ENCODE measurements at regions of chr4 and their contacts with region 1.

Region 1: DNA sequence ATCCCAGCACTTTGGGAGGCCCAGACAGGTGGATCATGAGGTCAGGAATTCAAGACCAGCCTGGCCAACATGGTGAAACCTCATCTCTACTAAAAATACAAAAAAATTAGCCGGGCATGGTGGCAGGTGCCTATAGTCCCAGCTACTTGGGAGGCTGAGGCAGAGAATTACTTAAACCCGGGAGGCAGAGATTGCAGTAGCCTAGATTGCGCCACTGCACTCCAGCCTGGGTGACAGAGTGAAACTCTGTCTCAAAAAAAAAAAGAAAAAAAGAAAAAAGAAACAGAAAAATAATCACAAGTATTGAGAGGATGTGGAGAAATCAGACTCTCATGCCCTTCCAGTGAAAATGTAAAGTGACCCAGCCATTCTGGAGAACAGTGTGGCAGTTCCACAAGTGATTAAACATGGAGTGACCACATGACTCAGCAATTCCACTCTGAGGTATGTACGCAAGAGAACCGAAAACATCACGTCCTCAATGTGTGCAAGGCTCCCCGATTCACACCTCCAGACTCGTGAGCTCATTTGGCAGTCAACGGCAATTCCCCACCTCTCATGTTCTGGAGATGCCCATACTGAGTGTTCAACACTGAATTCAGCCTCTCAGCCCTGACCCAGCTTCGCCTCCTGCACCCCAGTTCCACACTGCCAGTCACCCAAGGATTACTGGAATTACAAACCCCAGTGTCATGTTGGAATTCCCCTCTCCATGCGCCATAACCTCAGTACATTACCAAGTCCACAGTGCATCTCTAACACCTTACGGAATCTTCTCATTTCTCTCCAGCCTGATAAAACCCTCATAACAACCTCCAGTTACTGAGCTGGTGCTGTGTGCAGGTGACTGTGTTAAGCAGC is 21.1 kb downstream of the ACOX3 start:
- DNase-seq: peak; percentile 88
- H3K4me3 Mint-ChIP-seq: peak overlapping the region; percentile 10
- H3K27ac Mint-ChIP-seq: peak overlapping the region; percentile 97
- H3K4me1 Mint-ChIP-seq: peaks cover 43% of the 10 kb centered on the region
- H3K27me3 Mint-ChIP-seq: peaks cover under 1% of the 10 kb centered on the region

Region 2: DNA sequence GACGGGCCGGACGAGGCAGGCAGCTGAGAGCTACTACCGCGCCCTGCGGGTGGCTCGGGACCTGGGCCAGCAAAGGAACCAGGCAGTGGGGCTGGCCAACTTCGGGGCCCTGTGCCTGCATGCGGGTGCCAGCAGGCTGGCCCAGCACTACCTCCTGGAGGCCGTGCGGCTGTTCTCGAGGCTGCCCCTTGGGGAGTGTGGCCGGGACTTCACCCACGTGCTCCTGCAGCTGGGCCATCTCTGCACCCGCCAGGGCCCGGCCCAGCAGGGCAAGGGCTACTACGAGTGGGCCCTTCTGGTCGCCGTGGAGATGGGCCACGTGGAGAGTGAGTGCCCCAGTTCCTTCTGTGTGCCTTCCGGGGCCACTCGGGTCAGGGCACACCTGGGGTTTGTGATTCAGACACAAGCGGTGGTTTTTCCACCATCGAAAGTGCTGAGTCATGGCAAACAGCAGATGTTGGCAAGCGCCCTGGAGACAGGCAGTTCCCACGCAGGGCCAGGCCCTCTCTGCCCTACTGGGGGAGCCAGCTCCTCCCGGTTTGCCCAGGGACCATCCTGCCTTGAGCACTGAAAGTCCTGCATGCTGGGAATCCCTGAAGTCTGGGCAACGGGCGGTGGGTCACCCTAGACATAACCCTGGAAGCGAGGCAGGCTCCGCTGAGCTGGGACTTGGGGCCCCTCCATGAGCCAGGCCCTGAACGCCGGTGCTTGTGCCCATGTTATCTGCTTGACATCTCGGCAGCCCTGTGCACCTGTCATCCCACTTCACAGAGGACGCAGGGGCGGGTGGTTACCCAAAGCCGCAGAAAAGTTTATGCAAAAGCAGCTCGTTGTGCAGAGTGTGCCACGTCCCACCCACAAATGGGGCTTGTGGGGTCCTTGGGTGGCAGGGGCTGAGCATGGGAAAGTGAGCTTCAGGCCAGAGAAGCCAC is 190.8 kb before region 1 on chr4:
- CTCF ChIA-PET with region 1: no interaction called
- POLR2A ChIA-PET with region 1: interaction called, 5 read pairs
- intact Hi-C with region 1: loop called (anchors 2 kb)
- DNase-seq: peak; percentile 94
- H3K4me3 Mint-ChIP-seq: no peak overlapping the region
- H3K27ac Mint-ChIP-seq: peak overlapping the region; percentile 66
- H3K4me1 Mint-ChIP-seq: peaks cover 25% of the 10 kb centered on the region
- H3K27me3 Mint-ChIP-seq: no peaks in the 10 kb centered on the region

Region 3: DNA sequence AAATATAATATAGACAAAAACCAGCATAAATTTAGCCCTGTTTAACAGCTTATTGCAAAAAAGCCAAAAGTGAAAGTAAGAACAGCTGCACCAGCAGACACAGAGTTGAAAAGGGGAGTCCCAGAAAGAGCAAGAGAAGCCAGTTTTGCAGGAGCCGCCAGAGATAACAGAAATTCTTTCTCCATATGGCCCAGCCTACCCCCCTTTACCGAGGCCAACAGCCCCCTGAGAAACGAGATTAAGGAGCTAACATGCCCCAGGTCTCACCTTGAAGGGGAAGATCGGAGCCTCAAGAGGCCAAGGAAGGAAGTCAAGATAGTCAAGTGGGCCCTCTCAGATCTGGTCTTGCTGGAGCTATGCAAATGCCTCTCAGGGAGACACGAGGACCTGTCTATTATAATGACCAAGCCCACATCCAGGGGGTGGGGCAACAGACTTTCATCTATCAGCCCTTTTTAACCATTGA is 16.3 kb after region 1 on chr4:
- CTCF ChIA-PET with region 1: interaction called, 8 read pairs
- POLR2A ChIA-PET with region 1: interaction called, 21 read pairs
- intact Hi-C with region 1: loop called (anchors 1 kb)
- DNase-seq: peak; percentile 71
- H3K4me3 Mint-ChIP-seq: peak overlapping the region; percentile 73
- H3K27ac Mint-ChIP-seq: peak overlapping the region; percentile 93
- H3K4me1 Mint-ChIP-seq: peaks cover 45% of the 10 kb centered on the region
- H3K27me3 Mint-ChIP-seq: no peaks in the 10 kb centered on the region

Region 4: DNA sequence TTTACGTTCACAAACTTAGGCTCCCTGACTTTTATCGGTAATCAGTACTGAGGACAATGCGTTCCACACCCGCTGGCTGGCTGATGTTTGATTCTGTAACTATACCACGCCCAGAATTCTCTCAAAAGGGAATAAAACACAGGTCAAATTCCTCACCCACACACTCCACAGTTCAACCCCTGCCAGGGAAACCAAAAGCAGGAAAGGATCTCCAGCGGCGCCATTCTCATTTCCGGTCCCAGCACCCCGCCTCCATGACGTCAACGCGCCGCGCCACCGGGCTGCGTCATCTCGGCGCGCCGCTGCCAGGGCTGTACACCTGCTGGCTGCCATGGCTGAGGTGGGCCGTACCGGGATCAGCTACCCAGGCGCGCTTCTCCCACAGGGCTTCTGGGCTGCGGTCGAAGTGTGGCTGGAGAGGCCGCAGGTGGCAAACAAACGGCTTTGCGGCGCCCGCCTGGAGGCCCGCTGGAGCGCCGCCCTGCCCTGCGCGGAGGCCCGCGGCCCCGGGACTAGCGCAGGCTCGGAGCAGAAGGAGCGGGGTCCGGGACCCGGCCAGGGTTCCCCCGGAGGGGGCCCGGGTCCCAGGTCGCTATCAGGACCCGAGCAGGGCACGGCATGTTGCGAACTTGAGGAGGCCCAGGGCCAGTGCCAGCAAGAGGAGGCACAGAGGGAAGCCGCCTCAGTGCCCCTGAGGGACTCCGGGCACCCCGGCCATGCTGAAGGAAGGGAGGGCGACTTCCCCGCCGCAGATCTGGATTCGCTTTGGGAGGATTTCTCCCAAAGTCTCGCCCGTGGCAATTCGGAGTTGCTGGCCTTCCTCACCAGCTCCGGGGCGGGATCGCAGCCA is 21.3 kb after region 1 on chr4 and contains the starts of genes ACOX3 and TRMT44:
- CTCF ChIA-PET with region 1: interaction called, 8 read pairs
- POLR2A ChIA-PET with region 1: interaction called, 21 read pairs
- intact Hi-C with region 1: loop called (anchors 1 kb)
- DNase-seq: peak; percentile 97
- H3K4me3 Mint-ChIP-seq: peak within 1 kb of the TSS; percentile 95
- H3K27ac Mint-ChIP-seq: peak within 1 kb of the TSS; percentile 99
- H3K4me1 Mint-ChIP-seq: peaks cover 73% of the 10 kb centered on the region
- H3K27me3 Mint-ChIP-seq: no peaks in the 10 kb centered on the region
- total RNA-seq, gene ACOX3: 42.3 to 45.8 TPM
- total RNA-seq, gene TRMT44: 24.1 to 29.2 TPM

Region 5: DNA sequence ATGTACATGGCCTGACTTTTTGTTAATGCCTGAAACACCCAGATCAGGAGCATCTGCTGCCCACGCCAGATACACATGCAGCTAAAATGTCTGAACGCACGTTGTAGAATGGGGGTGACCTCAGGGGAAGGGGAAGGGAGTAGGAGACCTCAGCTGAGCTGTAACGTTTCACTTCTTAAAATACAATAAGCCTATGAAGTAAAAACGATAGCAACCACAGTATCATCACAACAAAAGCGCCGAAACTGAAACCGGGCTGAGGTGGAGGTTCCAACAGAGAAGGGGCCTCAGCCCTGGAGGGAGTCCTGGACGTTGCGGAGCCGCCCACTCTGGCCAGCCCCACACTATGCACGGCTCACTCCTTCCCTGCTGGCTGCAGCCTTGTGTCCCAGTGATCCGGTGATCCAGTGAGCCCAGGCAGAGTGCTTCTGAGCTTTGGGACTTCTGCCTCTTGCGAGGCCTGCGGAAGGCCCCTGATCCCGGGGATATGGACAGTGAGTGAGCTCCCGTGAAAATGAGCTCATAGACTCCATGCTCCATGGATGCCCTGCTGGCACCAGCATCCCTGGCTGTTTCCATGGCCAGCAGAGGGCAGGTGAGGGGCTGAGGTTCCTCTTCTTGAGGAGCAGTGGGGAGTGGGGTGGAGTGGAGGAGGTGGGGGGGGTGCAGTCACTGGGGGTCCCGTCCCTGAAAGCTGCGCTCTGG is 400.2 kb after region 1 on chr4:
- CTCF ChIA-PET with region 1: no interaction called
- POLR2A ChIA-PET with region 1: no interaction called
- intact Hi-C with region 1: no loop called
- DNase-seq: no peak
- H3K4me3 Mint-ChIP-seq: no peak overlapping the region
- H3K27ac Mint-ChIP-seq: no peak overlapping the region
- H3K4me1 Mint-ChIP-seq: no peaks in the 10 kb centered on the region
- H3K27me3 Mint-ChIP-seq: peaks cover 5% of the 10 kb centered on the region